ENCODE measurements at regions of chr10 and their contacts with region 1.

Region 1: GRCh38 chr10:24518981-24519597 is 204.6 kb downstream of the ARHGAP21 start:
- DNase-seq: peak in 4 of 5 donors; percentile 46 to 69 (median 60)
- ATAC-seq: peak; percentile 40 to 82 (median 66)
- H3K4me3 ChIP-seq: no peak overlapping the region
- H3K27ac ChIP-seq: no peak overlapping the region
- H3K4me1 ChIP-seq: peaks cover 0 to 10% (median 2%) of the 10 kb centered on the region in 12 donors
- H3K27me3 ChIP-seq: no peaks in the 10 kb centered on the region
- CTCF ChIP-seq: peak; percentile 62 to 84 (median 74)
- POLR2A ChIP-seq: no peak

Region 2: GRCh38 chr10:24360282-24361127 is 158.6 kb before region 1 on chr10:
- intact Hi-C with region 1: loop called in 3 of 10 experiments (anchors 5 to 10 kb)
- DNase-seq: peak in 4 of 5 donors; percentile 67 to 75 (median 69)
- ATAC-seq: peak in 3 of 4 donors; percentile 60 to 83 (median 78)
- H3K4me3 ChIP-seq: no peak overlapping the region
- H3K27ac ChIP-seq: no peak overlapping the region
- H3K4me1 ChIP-seq: peaks cover 0 to 18% (median 3%) of the 10 kb centered on the region in 12 donors
- H3K27me3 ChIP-seq: no peaks in the 10 kb centered on the region
- CTCF ChIP-seq: peak; percentile 49 to 85 (median 75)
- POLR2A ChIP-seq: no peak

Region 3: GRCh38 chr10:24374134-24374915 is 144.8 kb before region 1 on chr10:
- intact Hi-C with region 1: loop called in 5 of 10 experiments (anchors 5 to 10 kb)
- DNase-seq: no peak
- ATAC-seq: no peak
- H3K4me3 ChIP-seq: no peak overlapping the region
- H3K27ac ChIP-seq: no peak overlapping the region
- H3K4me1 ChIP-seq: peaks cover 0 to 15% (median 4%) of the 10 kb centered on the region in 12 donors
- H3K27me3 ChIP-seq: no peaks in the 10 kb centered on the region
- CTCF ChIP-seq: no peak
- POLR2A ChIP-seq: no peak

Region 4: GRCh38 chr10:24383681-24384106 is 135.4 kb before region 1 on chr10:
- intact Hi-C with region 1: loop called in 4 of 10 experiments (anchors 5 to 10 kb)
- DNase-seq: peak; percentile 87 to 91 (median 90)
- ATAC-seq: peak; percentile 79 to 96 (median 94)
- H3K4me3 ChIP-seq: no peak overlapping the region
- H3K27ac ChIP-seq: peak overlapping the region; percentile 18 to 78 (median 66)
- H3K4me1 ChIP-seq: peaks cover 0 to 41% (median 24%) of the 10 kb centered on the region in 12 donors
- H3K27me3 ChIP-seq: no peaks in the 10 kb centered on the region
- CTCF ChIP-seq: peak; percentile 30 to 74 (median 54)
- POLR2A ChIP-seq: no peak